Gastrocnemius medialis (tissue), 4 donors: ENCODE measurements at regions of chr12 and their contacts with region 1.

Region 1: GRCh38 chr12:50504798-50505385 is at the start of gene DIP2B:
- DNase-seq: peak; percentile 92 to 93
- ATAC-seq: peak; percentile 84 to 88
- H3K4me3 ChIP-seq: peak within 1 kb of the TSS; percentile 64 to 92 (median 82)
- H3K27ac ChIP-seq: peak within 1 kb of the TSS; percentile 90 to 97 (median 93)
- H3K4me1 ChIP-seq: peaks cover 39 to 47% of the 10 kb centered on the region in 2 donors
- H3K27me3 ChIP-seq: no peaks in the 10 kb centered on the region
- CTCF ChIP-seq: peak; percentile 85 to 98 (median 96)
- POLR2A ChIP-seq: peak; percentile 49 to 79
- total RNA-seq, gene DIP2B: 11.5 to 15.2 (median 12.2) TPM

Region 2: DNA sequence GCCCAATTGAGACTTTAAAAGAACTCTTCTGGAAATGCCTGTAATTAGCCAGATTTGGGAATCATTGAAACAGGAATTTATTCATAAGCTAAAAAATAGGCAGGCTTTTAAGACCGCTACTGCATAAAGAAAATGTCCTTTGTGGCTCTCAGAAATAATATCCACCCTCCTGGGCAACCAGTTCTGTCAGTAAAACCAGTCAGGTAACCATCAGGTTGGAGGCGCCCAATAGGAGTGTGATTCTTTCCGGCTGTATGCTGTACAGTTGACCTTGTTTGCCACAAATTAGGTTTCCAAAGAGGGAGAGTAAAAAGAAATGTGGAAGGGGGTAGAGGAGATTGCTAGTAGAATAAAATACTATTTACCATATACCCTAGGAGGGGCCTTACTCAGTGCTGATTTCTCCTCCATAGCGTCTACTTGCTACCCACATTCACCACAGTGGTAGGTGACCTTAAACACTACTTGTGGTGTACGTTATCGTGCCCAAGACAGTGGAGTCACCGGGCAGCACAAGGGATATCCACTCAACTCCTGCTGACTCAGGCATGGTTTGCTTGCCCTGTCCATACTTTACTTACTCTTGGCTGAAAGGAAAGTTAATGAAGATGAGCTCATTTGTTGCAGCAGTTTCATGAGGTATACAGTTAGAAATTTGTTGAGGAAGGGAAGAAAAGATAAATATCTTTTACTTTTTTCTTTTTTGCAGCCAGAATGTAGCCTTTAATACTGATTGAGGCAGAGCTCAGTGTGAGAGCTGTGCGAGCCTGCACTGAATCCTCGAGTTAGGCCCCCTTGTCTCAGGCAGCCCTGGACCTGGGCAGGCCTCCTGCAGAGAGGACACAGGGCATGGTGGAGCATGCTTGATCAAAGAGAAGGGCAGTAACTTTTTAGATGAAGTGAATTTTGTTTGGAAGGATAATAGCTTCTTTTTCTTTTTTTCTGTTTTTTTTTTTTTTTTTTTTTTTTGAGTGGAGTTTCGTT is 76.6 kb after region 1 on chr12:
- in situ Hi-C with region 1: no loop called
- intact Hi-C with region 1: no loop called
- DNase-seq: no peak
- ATAC-seq: no peak
- H3K4me3 ChIP-seq: no peak overlapping the region
- H3K27ac ChIP-seq: no peak overlapping the region
- H3K4me1 ChIP-seq: peaks cover 6 to 17% of the 10 kb centered on the region in 2 donors
- H3K27me3 ChIP-seq: no peaks in the 10 kb centered on the region
- CTCF ChIP-seq: no peak
- POLR2A ChIP-seq: no peak

Region 3: DNA sequence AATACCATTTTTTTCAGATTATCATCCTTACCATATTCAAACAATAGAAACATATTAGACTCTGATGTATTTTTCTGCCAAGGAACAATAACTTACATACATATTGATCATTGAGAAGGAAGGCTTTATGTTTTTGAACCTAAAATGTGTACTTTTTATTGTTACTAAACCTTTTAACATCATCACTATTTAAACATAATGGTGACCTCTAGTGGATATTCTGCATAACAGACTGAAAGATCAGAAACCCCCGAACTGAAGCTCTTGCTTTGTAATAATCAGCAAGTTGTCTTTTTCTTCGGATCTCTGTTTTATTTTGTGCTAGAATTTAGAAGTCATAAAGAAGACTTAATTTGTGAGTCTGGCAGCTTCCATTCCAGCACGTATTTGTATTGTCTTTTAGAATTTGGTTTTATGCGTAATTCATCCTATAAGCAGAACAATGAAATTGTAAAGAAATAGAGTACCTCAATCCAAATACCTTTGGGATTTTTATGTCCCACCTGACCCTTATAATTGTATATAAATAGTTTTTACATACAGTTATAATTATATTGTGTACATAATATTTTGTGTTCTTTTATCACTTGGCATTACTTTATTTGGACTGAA is 133.1 kb after region 1 on chr12:
- in situ Hi-C with region 1: loop called (anchors 5 kb)
- intact Hi-C with region 1: loop called (anchors 1 kb)
- DNase-seq: no peak
- ATAC-seq: no peak
- H3K4me3 ChIP-seq: no peak overlapping the region
- H3K27ac ChIP-seq: no peak overlapping the region
- H3K4me1 ChIP-seq: peaks cover 9 to 43% of the 10 kb centered on the region in 2 donors
- H3K27me3 ChIP-seq: no peaks in the 10 kb centered on the region
- CTCF ChIP-seq: peak; percentile 43 to 65 (median 60)
- POLR2A ChIP-seq: no peak

Region 4: DNA sequence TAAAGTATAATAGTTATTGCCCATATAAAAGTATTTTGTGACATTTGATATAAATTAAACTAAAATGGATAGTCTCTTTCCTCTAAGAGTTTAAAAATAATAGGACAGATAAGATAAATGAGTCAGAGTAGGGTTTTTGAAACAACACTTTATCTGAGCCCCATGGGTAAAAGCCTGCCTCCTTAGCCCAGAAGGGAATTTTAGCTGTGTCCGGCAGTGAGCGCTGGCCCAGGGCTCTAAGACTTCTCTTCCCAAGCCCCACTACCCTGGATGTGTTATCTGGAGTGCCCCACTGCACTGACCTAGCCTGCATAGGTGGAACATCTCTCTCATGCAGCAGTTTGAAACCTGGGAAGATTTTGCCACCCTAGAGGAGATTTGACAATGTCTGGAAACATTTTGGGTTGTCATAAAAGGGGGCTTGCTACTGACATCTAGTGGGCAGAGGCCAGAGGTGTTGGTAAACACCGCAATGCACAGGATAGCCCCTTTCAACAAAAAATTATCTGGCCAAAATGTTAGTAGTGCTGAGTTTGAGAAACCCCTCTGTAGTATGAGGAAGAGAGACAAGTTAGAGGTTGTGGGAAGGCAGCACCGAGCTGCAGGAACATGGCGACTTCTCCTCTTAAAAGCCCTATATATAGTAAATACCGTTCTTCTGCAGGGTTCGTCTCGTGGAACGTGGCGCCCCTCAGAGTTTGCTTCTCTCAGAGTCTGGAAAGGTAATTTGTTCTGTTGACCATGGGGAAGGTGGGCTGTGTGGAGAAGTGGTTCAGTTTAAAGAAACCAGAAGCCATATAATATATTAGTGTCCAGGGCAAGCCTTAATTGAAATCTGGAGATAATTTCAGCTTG is 229.7 kb after region 1 on chr12:
- in situ Hi-C with region 1: loop called in 1 of 4 experiments (anchors 25 kb)
- intact Hi-C with region 1: loop called (anchors 2 kb)
- DNase-seq: no peak
- ATAC-seq: peak; percentile 59 to 70
- H3K4me3 ChIP-seq: no peak overlapping the region
- H3K27ac ChIP-seq: no peak overlapping the region
- H3K4me1 ChIP-seq: no peaks in the 10 kb centered on the region
- H3K27me3 ChIP-seq: no peaks in the 10 kb centered on the region
- CTCF ChIP-seq: peak; percentile 39 to 62 (median 47)
- POLR2A ChIP-seq: no peak